ENCODE measurements at regions of chr9 and their contacts with region 1.

Region 1: DNA sequence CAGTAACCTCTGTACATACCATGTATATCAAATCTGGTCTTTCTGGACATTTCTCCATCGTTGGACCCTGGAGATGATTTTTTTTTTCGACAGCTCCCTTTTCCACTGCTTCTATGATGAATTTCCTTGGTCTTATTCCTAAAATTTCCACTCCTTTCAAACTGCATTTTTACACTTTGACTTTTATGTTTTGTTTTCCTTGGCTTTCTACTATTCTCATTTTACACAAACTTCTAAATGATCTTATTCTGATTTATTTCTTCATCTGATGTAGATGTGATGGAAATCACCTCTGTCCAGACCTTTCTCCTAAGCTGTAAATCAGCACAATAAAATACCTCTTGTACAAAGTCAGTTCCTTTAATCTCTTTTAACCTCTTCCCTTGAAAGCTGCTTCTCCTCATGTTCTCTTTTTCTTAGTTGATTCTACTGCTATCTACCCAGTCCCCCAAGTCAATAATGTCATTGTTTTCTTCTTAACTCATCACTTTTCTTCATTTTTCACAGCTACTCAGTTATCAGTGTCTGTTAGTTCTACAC is 48.7 kb upstream of the TUSC1 start:
- DNase-seq: no peak
- H3K4me3 ChIP-seq: no peak overlapping the region
- CTCF ChIP-seq: no peak

Region 2: DNA sequence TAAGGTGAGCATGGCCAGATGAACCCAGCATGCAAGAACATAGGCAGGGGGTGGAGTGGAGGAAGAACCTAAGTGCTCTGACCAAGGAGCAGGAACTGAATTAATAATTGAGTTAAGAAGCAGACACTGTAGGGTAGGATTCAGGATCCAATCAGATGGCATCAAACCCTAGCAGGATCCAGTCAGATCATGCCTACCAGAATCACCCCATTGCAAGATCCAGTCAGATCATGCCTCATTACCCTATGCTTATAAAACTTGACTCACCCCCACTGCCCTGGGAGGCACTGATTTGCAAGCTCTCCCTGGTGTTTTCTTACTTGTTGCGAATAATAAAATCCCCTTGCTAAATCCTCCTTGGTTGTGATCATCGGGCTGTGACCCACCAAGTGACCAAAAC is 68.4 kb before region 1 on chr9:
- CTCF ChIA-PET with region 1: no interaction called
- POLR2A ChIA-PET with region 1: no interaction called
- DNase-seq: no peak
- H3K4me3 ChIP-seq: no peak overlapping the region
- CTCF ChIP-seq: no peak

Region 3: DNA sequence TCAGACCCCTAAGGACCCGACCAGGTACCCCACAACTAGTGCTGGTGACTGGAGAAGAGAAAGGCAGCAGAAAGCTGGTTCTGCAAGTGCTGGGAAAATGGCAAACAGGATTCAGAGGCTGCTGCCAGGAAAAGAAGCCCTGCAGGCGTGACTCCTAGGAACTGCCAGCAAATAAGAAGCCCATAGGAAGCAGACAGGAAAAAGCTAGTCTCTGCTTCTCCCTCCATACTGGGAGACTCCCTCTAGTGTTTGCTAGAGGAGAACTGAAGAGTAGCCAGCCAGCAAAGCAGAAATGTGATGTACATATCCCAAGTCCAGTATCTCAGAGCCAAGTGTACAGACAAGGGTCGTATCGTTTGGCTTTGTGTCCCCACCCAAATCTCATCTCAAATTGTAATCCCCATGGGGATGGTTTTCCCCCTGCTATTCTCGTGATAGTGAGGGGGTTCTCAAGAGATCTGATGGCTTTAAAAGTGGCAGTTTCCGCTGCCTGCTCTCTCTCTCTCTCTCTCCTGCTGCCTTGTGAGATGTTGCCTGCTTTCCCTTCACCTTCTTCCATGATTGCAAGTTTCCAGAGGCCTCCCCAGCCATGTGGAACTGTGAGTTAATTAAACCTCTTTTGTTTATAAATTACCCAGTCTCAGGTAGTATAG is 10.6 kb before region 1 on chr9:
- CTCF ChIA-PET with region 1: interaction called, 12 read pairs
- POLR2A ChIA-PET with region 1: no interaction called
- DNase-seq: peak; percentile 12
- H3K4me3 ChIP-seq: no peak overlapping the region
- CTCF ChIP-seq: peak; percentile 71

Measured in AG04449 (cell line).